ENCODE measurements at regions of chr5 and their contacts with region 1.

Region 1: DNA sequence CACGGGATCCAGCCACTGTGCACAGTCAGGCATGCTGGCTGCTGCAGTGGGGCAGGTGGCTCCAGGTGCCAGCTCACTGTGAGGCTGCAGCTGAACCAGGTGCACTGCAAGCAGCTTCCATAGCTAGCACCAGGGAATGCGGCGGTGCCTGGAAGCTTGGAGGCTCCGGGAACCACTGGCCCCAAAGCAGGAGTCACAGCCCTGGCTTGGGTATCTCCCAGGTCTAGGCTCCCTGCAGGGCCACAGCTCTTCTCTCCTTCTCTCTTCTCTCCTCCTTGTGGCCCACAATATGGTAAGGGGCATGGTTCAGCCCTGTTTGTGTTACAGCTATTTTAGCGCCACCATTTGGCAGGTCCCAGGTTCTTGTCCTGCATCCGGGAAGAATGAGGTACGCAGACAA is 6.7 kb upstream of the MTMR12 start:
- DNase-seq: peak; percentile 54
- ATAC-seq: peak; percentile 87
- H3K4me3 Mint-ChIP-seq: no peak overlapping the region
- H3K27ac Mint-ChIP-seq: no peak overlapping the region
- H3K4me1 Mint-ChIP-seq: peaks cover 6% of the 10 kb centered on the region; the same call in 1 of the 2 replicates
- H3K27me3 Mint-ChIP-seq: no peaks in the 10 kb centered on the region
- CTCF ChIP-seq: no peak

Region 2: GRCh38 chr5:31921852-31922305 is 397.5 kb before region 1 on chr5:
- CTCF ChIA-PET with region 1: no interaction called
- POLR2A ChIA-PET with region 1: no interaction called
- DNase-seq: no peak
- ATAC-seq: peak; percentile 79
- H3K4me3 Mint-ChIP-seq: no peak overlapping the region
- H3K27ac Mint-ChIP-seq: peak overlapping the region; percentile 49; the same call in 1 of the 2 replicates
- H3K4me1 Mint-ChIP-seq: peaks cover 14% of the 10 kb centered on the region
- H3K27me3 Mint-ChIP-seq: no peaks in the 10 kb centered on the region
- CTCF ChIP-seq: no peak

Region 3: GRCh38 chr5:32055891-32056866 is 263.2 kb before region 1 on chr5:
- CTCF ChIA-PET with region 1: no interaction called
- POLR2A ChIA-PET with region 1: no interaction called
- DNase-seq: no peak
- ATAC-seq: no peak
- H3K4me3 Mint-ChIP-seq: no peak overlapping the region
- H3K27ac Mint-ChIP-seq: no peak overlapping the region
- H3K4me1 Mint-ChIP-seq: peaks cover 20% of the 10 kb centered on the region
- H3K27me3 Mint-ChIP-seq: no peaks in the 10 kb centered on the region
- CTCF ChIP-seq: no peak

Region 4: GRCh38 chr5:32144378-32145207 is 174.8 kb before region 1 on chr5:
- CTCF ChIA-PET with region 1: no interaction called
- POLR2A ChIA-PET with region 1: no interaction called
- DNase-seq: no peak
- ATAC-seq: no peak
- H3K4me3 Mint-ChIP-seq: no peak overlapping the region
- H3K27ac Mint-ChIP-seq: peak overlapping the region; percentile 50; the same call in 1 of the 2 replicates
- H3K4me1 Mint-ChIP-seq: peaks cover 4% of the 10 kb centered on the region
- H3K27me3 Mint-ChIP-seq: no peaks in the 10 kb centered on the region
- CTCF ChIP-seq: no peak

Region 5: GRCh38 chr5:32283539-32284377 is 35.6 kb before region 1 on chr5:
- CTCF ChIA-PET with region 1: interaction called, 11 read pairs
- POLR2A ChIA-PET with region 1: interaction called, 3 read pairs
- DNase-seq: no peak
- ATAC-seq: peak; percentile 11
- H3K4me3 Mint-ChIP-seq: no peak overlapping the region; the same call in 1 of the 2 replicates
- H3K27ac Mint-ChIP-seq: peak overlapping the region; percentile 73
- H3K4me1 Mint-ChIP-seq: peaks cover 81% of the 10 kb centered on the region
- H3K27me3 Mint-ChIP-seq: no peaks in the 10 kb centered on the region
- CTCF ChIP-seq: no peak